HEK293 (cell line): ENCODE measurements at regions of chr11 and their contacts with region 1.

Region 1: GRCh38 chr11:67317205-67317887 is 14.0 kb downstream of the SSH3 start:
- H3K4me3 ChIP-seq: peak overlapping the region; percentile 75
- H3K27ac ChIP-seq: peak overlapping the region; percentile 79
- H3K4me1 ChIP-seq: no peaks in the 10 kb centered on the region
- CTCF ChIP-seq: peak; percentile 98

Region 2: DNA sequence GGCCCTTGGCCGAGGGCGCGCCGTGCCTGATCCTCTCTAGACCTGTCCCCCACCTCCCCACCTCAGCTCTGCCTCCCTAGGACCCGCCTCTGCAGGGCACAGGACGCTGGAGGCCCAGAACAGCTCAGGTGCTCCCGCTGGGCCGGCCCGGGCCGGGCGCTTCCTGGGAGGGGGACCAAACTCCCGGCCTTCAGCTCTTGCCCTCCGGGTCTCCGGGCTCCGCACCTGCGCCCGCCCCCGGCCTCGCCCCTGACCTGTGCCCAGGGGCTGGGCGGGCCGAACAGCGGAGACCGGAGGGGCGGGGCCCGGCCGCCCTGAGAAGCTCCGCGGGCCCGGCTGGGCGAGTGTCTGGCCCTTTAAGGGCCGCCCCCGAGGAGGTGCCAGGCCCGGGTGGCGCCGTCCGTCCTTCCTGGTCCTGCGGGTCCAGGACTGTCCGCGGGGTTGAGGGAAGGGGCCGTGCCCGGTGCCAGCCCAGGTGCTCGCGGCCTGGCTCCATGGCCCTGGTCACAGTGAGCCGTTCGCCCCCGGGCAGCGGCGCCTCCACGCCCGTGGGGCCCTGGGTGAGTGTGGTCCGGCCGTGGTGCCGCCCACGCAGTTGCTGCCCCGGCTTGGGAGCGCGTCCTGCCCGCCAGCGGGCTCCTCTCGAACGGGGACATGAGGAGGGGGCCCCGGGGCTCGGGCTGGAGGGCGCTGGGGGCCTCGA is 14.1 kb before region 1 on chr11 and contains the start of gene SSH3:
- CTCF ChIA-PET with region 1: interaction called, 17 read pairs
- POLR2A ChIA-PET with region 1: interaction called, 32 read pairs
- H3K4me3 ChIP-seq: peak within 1 kb of the TSS; percentile 66
- H3K27ac ChIP-seq: peak within 1 kb of the TSS; percentile 79; the same call in 1 of the 2 replicates
- H3K4me1 ChIP-seq: no peaks in the 10 kb centered on the region
- CTCF ChIP-seq: no peak

Region 3: DNA sequence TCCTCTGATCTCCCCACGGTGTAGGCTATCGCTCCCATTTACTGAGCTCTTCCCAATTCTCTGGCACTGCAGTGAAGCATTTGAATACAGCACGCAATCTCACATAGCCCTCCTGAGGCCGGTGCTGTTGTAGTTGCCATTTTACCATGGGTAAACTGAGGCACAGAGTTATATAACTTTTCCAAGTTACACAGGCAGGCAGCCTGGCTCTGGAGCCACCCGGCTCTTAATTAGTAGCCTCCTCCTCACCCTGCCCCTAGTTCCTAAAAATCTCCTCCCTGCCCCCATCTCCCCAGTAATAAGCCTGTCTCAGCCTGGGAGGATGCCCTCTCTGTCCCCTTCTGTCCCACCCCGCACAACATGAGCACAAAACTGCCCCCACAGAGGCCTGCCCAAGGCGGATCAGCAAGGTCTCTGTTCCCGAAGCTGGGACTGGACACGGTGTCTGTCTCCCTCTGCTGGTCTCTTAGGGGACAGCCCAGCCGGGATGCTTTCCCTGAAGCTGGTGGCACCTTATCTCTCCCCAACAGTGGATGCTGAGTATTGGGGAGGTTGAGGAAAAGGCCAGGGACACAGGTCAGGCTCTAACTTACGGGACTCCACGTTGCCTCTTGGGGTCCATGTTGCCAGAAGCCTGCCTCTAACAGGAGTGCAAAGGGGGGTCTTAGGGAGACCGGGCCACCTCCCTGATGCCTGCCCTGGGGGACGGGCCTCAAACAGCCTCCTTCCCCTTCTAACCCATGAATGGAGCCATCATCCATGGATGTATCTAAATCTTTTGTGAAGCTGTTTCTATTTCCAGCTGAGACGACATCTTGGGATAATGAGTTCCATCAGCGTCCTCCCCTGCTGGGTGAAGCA is 65.2 kb after region 1 on chr11:
- CTCF ChIA-PET with region 1: interaction called, 12 read pairs
- POLR2A ChIA-PET with region 1: no interaction called
- H3K4me3 ChIP-seq: no peak overlapping the region
- H3K27ac ChIP-seq: no peak overlapping the region
- H3K4me1 ChIP-seq: no peaks in the 10 kb centered on the region
- CTCF ChIP-seq: peak; percentile 92